ENCODE measurements at regions of chr20 and their contacts with region 1.

Region 1: DNA sequence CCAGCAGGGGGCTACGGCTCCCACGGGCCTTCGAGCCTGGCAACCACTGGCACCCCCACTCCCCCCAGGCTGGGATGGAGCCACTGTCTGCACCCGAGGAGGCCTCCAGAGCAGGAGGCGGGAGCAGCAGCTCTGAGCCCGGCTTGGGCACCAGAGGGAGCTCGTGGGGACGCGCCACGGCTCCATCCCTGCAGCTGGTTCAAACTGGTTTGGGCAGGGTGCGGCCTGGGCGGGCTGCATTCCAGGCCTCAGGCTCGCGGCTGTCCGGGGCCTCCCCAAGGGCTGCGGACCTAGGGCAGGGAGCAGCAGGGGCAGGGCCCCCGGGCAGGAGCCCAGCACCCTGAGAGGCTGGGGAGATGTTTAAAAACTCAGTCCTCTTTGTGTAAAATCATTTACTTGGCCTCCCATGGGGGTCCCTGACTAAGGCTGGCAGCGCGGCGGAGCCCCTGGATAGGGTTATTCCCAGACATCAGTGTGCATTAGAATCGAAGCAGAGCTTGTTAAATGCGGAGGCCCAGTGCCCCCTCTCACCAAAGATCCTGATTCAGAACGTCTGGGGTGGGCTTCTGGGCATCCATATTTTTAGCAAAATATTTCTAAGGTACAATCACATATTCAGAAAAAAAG is 4.1 kb upstream of the BCAS4 start:
- DNase-seq: peak; percentile 51
- ATAC-seq: peak; percentile 83
- H3K4me3 ChIP-seq: no peak overlapping the region; the same call in 1 of the 2 replicates
- H3K27ac ChIP-seq: peak overlapping the region; percentile 65
- H3K4me1 ChIP-seq: peaks cover 10% of the 10 kb centered on the region
- H3K27me3 ChIP-seq: no peaks in the 10 kb centered on the region
- CTCF ChIP-seq: peak; percentile 81 to 95 (median 90)
- EP300 ChIP-seq: no peak
- POLR2A ChIP-seq: peak; percentile 94
- RAD21 ChIP-seq: peak; percentile 51

Region 2: DNA sequence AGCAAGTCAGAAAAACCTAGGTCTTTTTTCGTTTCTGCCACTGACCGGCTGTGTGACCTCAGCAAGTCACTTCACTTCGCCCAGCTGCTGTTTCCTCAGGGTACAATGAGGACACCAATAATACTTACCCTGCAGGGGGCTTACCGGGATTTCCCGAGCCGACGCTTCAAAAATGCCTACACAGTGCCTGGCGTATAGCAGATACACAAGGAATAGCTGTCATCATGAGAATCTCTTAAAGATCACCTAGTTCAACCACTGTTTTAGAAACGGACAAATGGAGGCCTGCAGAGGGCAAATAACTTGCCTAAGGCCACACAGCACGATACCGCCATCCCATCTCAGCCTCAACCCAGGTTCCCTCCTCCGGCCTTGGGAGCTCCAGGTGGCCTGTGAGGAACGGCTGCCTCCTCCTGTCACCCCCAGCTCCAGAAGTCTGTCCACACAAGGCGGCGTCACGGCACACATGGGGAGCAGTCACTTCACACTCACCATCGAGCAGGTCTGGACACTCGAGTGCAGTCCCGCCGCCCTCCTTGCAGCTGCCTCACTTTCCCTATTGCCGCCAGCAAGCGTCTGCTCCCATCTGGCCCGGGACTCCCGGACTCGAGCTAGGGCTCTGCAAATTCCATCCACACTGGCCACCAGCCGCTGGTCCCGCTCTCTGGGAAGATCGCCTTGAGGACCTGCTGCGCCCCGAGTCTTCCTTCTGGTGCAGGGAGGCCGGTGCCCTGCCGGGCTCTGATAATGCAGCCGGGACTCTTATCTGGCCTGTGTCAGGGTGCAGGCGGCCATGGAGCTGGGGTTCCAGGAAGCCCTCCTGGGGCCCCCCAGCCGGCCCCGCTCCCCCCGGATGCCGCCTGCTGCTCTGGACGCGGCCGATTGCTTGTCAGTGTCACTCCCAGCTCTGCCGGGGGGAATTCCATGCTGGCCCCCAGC is 99.9 kb before region 1 on chr20 and contains the start of gene RIPOR3:
- CTCF ChIA-PET with region 1: no interaction called
- POLR2A ChIA-PET with region 1: no interaction called
- RAD21 ChIA-PET with region 1: no interaction called
- SMC1A ChIA-PET with region 1: no interaction called
- in situ Hi-C with region 1: no loop called
- intact Hi-C with region 1: no loop called
- DNase-seq: no peak
- ATAC-seq: no peak
- H3K4me3 ChIP-seq: no peak within 1 kb of the TSS
- H3K27ac ChIP-seq: no peak within 1 kb of the TSS
- H3K4me1 ChIP-seq: no peaks in the 10 kb centered on the region
- H3K27me3 ChIP-seq: peaks cover 3 to 8% of the 10 kb centered on the region in 2 experiments; a peak in 3 of 4 replicates
- CTCF ChIP-seq: no peak
- EP300 ChIP-seq: no peak
- POLR2A ChIP-seq: no peak
- RAD21 ChIP-seq: no peak
- polyA plus RNA-seq, gene RIPOR3: not detected

Region 3: GRCh38 chr20:50731055-50731871 is 59.5 kb before region 1 on chr20 and contains the start of gene PARD6B:
- CTCF ChIA-PET with region 1: interaction called, 6 read pairs
- POLR2A ChIA-PET with region 1: interaction called, 3 read pairs
- RAD21 ChIA-PET with region 1: no interaction called
- SMC1A ChIA-PET with region 1: interaction called, 3 read pairs
- in situ Hi-C with region 1: no loop called
- intact Hi-C with region 1: loop called (anchors 2 kb)
- DNase-seq: peak; percentile 97
- ATAC-seq: peak; percentile 94
- H3K4me3 ChIP-seq: peak within 1 kb of the TSS; percentile 83
- H3K27ac ChIP-seq: peak within 1 kb of the TSS; percentile 39
- H3K4me1 ChIP-seq: peaks cover 12% of the 10 kb centered on the region; the same call in 1 of the 2 replicates
- H3K27me3 ChIP-seq: no peaks in the 10 kb centered on the region
- CTCF ChIP-seq: no peak
- EP300 ChIP-seq: no peak
- POLR2A ChIP-seq: peak; percentile 79
- RAD21 ChIP-seq: no peak
- polyA plus RNA-seq, gene PARD6B: 0.57 to 1.9 TPM

Region 4: DNA sequence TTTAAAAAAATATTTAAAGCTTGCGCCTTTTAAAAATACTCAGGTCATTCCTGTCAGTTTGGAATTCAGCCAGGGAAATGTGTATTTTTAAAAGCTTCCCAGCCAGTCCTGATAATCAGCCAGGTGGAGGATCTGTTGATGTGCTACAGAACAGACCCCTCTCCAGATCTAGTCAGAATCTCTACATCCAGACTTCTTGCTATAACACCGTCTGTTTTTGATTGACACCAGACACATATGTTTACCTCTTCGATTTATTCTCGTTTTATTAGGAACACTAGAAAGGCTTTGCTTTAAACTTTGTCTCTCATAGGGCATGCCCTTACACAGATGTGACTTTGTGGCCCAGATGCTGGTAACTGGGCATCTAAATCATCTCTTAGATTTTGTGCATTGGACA is 47.7 kb before region 1 on chr20:
- CTCF ChIA-PET with region 1: no interaction called
- POLR2A ChIA-PET with region 1: no interaction called
- RAD21 ChIA-PET with region 1: no interaction called
- SMC1A ChIA-PET with region 1: no interaction called
- in situ Hi-C with region 1: no loop called
- intact Hi-C with region 1: no loop called
- DNase-seq: no peak
- ATAC-seq: no peak
- H3K4me3 ChIP-seq: no peak overlapping the region
- H3K27ac ChIP-seq: no peak overlapping the region
- H3K4me1 ChIP-seq: peaks cover 6% of the 10 kb centered on the region; the same call in 1 of the 2 replicates
- H3K27me3 ChIP-seq: no peaks in the 10 kb centered on the region
- CTCF ChIP-seq: no peak
- EP300 ChIP-seq: no peak
- POLR2A ChIP-seq: no peak
- RAD21 ChIP-seq: no peak

Region 5: DNA sequence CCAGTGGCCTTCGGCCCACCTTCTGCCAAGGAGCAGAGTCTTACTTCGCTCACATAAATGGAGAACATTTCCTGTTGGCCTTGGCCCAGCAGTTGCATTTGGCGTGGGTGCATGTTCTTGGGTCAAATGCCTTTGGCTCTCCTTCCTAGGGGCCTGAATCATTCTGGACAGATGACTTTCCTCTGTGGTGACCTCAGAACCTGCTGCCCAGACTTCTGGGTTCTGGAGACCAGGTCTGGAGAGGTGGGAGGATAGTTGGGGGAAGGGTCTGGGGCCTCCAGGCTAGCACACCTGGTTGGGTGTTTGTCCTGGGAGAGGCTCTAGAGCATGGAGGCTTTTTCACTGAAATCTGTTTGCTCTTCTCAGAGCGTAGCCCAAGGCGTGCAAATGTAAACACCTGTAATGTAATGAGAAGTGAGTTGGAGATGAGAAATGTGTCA is 33.4 kb after region 1 on chr20:
- CTCF ChIA-PET with region 1: interaction called, 30 read pairs
- POLR2A ChIA-PET with region 1: no interaction called
- RAD21 ChIA-PET with region 1: interaction called, 141 read pairs
- SMC1A ChIA-PET with region 1: interaction called, 119 read pairs
- in situ Hi-C with region 1: no loop called
- intact Hi-C with region 1: no loop called
- DNase-seq: no peak
- ATAC-seq: no peak
- H3K4me3 ChIP-seq: no peak overlapping the region
- H3K27ac ChIP-seq: no peak overlapping the region
- H3K4me1 ChIP-seq: peaks cover 35% of the 10 kb centered on the region
- H3K27me3 ChIP-seq: no peaks in the 10 kb centered on the region
- CTCF ChIP-seq: no peak
- EP300 ChIP-seq: no peak
- POLR2A ChIP-seq: no peak
- RAD21 ChIP-seq: no peak

Region 6: DNA sequence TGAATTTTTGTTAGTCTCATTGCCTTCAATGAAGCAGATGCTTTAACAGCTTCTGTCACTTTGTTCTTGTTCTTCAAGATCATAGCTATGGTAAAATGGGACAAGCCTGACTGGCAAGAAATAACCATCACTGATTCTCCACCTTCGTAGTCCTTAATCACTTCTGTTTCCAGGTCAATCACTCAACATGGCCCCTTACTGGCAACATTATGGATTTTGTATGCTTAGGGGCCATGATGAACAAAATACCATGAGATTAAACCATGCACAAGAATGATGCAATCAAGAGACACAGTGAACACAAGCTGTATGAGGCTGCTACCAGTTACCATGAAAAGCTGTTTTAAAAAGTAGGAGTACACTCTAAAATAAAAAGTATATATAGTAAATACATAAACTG is 107.7 kb after region 1 on chr20:
- CTCF ChIA-PET with region 1: interaction called, 17 read pairs
- POLR2A ChIA-PET with region 1: interaction called, 11 read pairs
- RAD21 ChIA-PET with region 1: interaction called, 11 read pairs
- SMC1A ChIA-PET with region 1: no interaction called
- in situ Hi-C with region 1: no loop called
- intact Hi-C with region 1: loop called (anchors 5 kb)
- DNase-seq: no peak
- ATAC-seq: no peak
- H3K4me3 ChIP-seq: no peak overlapping the region
- H3K27ac ChIP-seq: no peak overlapping the region
- H3K4me1 ChIP-seq: no peaks in the 10 kb centered on the region
- H3K27me3 ChIP-seq: no peaks in the 10 kb centered on the region
- CTCF ChIP-seq: no peak
- EP300 ChIP-seq: no peak
- POLR2A ChIP-seq: no peak
- RAD21 ChIP-seq: no peak

Region 7: DNA sequence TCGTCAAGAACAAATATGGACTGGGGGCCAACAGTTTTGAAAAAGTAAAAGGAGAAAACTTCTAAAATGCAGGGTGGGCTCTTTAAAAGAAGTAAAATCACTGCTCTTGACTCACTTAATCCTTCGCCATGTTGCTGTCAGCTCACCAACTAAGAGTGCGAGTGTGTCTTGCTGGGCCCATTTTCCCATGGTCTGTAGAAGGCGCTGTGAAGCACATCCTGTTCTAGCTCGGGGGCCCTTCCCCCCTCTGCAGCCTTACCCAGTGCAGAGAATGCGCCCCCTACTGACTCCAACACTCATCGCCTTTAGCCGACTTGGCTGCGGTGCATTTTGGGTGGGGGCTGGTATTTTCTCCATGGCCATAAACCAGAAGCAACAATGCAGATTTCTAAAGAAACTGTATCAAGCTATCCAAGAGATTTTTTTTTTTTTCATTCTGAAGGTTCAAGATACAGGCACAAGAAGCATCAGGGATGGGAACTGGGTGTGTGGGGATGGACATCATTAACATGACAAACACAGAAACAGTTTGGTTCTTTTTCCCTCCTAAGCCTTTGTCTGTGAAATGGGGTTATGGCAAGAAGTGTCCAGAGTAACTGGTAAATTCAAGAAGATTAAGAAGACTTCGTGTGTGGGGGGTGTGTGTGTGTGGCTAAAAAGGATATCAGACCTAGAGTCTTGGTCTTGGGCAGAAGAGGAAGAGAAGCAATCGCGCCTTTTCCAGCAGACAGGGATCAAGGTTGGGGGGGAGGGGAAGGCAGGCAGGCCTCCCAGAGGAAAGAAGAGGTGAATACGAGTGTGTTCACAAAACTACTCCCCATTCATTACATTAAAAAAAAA is 138.8 kb after region 1 on chr20:
- CTCF ChIA-PET with region 1: interaction called, 336 read pairs
- POLR2A ChIA-PET with region 1: interaction called, 67 read pairs
- RAD21 ChIA-PET with region 1: interaction called, 125 read pairs
- SMC1A ChIA-PET with region 1: interaction called, 90 read pairs
- in situ Hi-C with region 1: no loop called
- intact Hi-C with region 1: loop called (anchors 1 kb)
- DNase-seq: peak; percentile 88
- ATAC-seq: peak; percentile 83
- H3K4me3 ChIP-seq: peak overlapping the region; percentile 94
- H3K27ac ChIP-seq: peak overlapping the region; percentile 70
- H3K4me1 ChIP-seq: peaks cover 5% of the 10 kb centered on the region; the same call in 1 of the 2 replicates
- H3K27me3 ChIP-seq: no peaks in the 10 kb centered on the region
- CTCF ChIP-seq: peak; percentile 98 to 100 (median 100); a peak in 5 of 6 replicates
- EP300 ChIP-seq: peak; percentile 15 to 74; a peak in 1 of 4 replicates
- POLR2A ChIP-seq: peak; percentile 64
- RAD21 ChIP-seq: peak; percentile 86

Region 8: GRCh38 chr20:50980851-50981713 is 190.3 kb after region 1 on chr20:
- CTCF ChIA-PET with region 1: interaction called, 68 read pairs
- POLR2A ChIA-PET with region 1: no interaction called
- RAD21 ChIA-PET with region 1: interaction called, 28 read pairs
- SMC1A ChIA-PET with region 1: interaction called, 12 read pairs
- in situ Hi-C with region 1: no loop called
- intact Hi-C with region 1: loop called (anchors 5 kb)
- DNase-seq: peak; percentile 2
- ATAC-seq: peak; percentile 88
- H3K4me3 ChIP-seq: no peak overlapping the region
- H3K27ac ChIP-seq: no peak overlapping the region
- H3K4me1 ChIP-seq: no peaks in the 10 kb centered on the region
- H3K27me3 ChIP-seq: no peaks in the 10 kb centered on the region; a peak in 1 of 4 replicates
- CTCF ChIP-seq: peak; percentile 70 to 90 (median 74)
- EP300 ChIP-seq: no peak
- POLR2A ChIP-seq: no peak
- RAD21 ChIP-seq: peak; percentile 38